ENCODE measurements at regions of chr11 and their contacts with region 1.

Region 1: GRCh38 chr11:45298718-45299117 is 12.6 kb upstream of the SYT13 start:
- DNase-seq: no peak
- ATAC-seq: no peak

Region 2: GRCh38 chr11:45209891-45210699 is 88.6 kb before region 1 on chr11:
- intact Hi-C with region 1: loop called in 1 of 2 experiments (anchors 10 kb)
- DNase-seq: peak; percentile 94
- ATAC-seq: peak; percentile 94 to 95

Region 3: GRCh38 chr11:45470151-45470793 is 171.6 kb after region 1 on chr11:
- intact Hi-C with region 1: no loop called
- DNase-seq: peak; percentile 49
- ATAC-seq: peak in 1 of 2 donors; percentile 86